Psoas muscle (tissue), 8 donors: ENCODE measurements at regions of chr1 and their contacts with region 1.

Region 1: GRCh38 chr1:101797740-101798139 is 199.0 kb downstream of the OLFM3 start:
- DNase-seq: no peak
- ATAC-seq: no peak
- H3K4me3 ChIP-seq: no peak overlapping the region
- H3K27ac ChIP-seq: no peak overlapping the region
- H3K4me1 ChIP-seq: no peaks in the 10 kb centered on the region
- H3K27me3 ChIP-seq: no peaks in the 10 kb centered on the region
- CTCF ChIP-seq: no peak

Region 2: DNA sequence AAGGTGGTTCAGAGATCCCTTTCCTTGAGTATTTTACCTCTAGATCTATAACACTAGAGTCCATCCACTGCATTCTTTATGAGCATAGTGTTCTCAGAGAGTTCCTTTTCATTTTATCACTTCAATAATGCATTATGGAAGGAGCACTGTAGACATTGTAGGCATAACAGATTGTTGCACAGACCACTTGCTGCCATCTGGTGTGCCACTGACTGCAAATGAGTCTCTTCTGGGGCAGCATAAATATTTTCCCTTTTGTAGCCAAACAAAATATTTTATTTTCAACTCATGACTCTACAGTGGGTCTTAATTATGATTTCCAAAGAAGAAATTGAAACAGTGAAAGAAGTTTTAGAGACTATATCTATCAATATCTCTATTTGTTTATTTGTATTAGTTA is 91.4 kb before region 1 on chr1:
- intact Hi-C with region 1: no loop called
- DNase-seq: no peak
- ATAC-seq: no peak
- H3K4me3 ChIP-seq: no peak overlapping the region
- H3K27ac ChIP-seq: no peak overlapping the region
- H3K4me1 ChIP-seq: no peaks in the 10 kb centered on the region
- H3K27me3 ChIP-seq: peaks cover 0 to 3% (median 0%) of the 10 kb centered on the region in 3 donors
- CTCF ChIP-seq: no peak

Region 3: GRCh38 chr1:101835988-101836387 is 38.2 kb after region 1 on chr1:
- intact Hi-C with region 1: loop called in 1 of 2 experiments (anchors 1 kb)
- DNase-seq: no peak
- ATAC-seq: no peak
- H3K4me3 ChIP-seq: no peak overlapping the region
- H3K27ac ChIP-seq: no peak overlapping the region
- H3K4me1 ChIP-seq: no peaks in the 10 kb centered on the region
- H3K27me3 ChIP-seq: no peaks in the 10 kb centered on the region
- CTCF ChIP-seq: no peak

Region 4: DNA sequence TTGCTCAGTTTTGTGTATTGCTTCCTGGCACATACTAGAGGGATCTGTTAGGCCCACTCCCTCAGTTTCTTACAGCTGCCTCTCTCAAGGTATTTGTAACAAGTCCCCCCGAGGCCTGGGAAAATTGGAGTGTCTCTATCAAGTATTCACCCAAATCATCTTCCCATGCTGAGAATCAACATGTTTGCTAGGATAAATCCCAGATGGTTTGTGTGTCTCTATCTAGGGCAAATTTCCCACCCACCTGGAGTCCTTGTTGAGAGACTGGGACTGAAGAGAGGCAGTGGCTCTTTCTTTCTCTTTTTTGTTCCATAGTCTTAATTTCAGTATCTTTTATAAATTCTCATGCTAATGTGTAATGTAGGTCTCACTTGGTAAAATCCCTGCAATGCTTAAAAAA is 140.9 kb after region 1 on chr1:
- intact Hi-C with region 1: no loop called
- DNase-seq: no peak
- ATAC-seq: no peak
- H3K4me3 ChIP-seq: no peak overlapping the region
- H3K27ac ChIP-seq: no peak overlapping the region
- H3K4me1 ChIP-seq: no peaks in the 10 kb centered on the region
- H3K27me3 ChIP-seq: no peaks in the 10 kb centered on the region
- CTCF ChIP-seq: no peak